ENCODE measurements at regions of chr19 and their contacts with region 1.

Region 1: DNA sequence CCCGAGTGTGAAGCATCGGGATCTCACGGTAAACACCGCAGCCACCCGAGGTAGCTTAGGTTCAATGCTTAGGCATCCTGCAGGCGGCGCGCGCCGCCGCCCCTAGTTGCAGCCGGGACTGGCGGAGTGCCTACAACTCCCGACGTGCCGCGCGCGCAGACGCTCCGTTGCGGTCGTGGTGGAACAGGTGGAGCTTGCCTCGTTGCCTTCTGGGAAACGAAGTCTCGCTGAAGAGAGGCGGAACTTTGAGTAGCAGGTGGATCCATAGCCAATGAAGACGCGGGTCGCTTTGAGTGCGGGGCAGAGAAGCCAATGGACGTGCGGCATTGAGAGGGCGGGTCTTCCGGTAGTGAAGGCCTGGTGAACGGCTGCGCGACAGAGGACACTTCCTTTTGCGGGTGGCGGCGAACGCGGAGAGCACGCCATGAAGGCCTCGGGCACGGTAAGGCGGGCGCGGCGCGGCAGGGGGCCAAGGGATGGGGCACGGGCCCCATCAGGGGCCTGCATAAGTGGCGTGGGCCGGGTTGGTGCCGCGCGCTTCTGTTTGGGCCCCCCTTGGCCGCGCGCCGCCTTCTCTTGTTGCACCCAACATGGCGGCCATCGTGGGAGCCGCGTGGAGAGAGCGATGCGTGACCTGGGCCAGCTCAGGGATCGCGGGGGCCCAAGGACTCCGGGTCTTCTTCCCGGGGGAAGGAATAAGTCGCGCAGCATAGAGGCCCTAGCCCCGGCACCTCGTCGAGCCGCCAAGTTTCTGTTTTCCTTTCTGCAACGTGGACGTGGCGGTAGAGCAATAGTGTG is at the start of gene RPL18A:
- DNase-seq: peak; percentile 96
- H3K4me3 ChIP-seq: peak within 1 kb of the TSS; percentile 86 to 91
- H3K27ac ChIP-seq: peak within 1 kb of the TSS; percentile 62 to 78
- H3K4me1 ChIP-seq: peaks cover 0 to 17% of the 10 kb centered on the region in 2 experiments; a peak in 1 of 4 replicates
- H3K27me3 ChIP-seq: no peaks in the 10 kb centered on the region
- CTCF ChIP-seq: peak; percentile 78
- EP300 ChIP-seq: no peak
- RAD21 ChIP-seq: peak; percentile 64
- polyA plus RNA-seq, gene RPL18A: 2,138 and 2,695 TPM in 2 replicates

Region 2: GRCh38 chr19:17605761-17606745 is 253.7 kb before region 1 on chr19:
- CTCF ChIA-PET with region 1: interaction called, 17 read pairs
- POLR2A ChIA-PET with region 1: interaction called, 6 read pairs
- DNase-seq: peak; percentile 98
- H3K4me3 ChIP-seq: peak overlapping the region; percentile 50 to 65
- H3K27ac ChIP-seq: peak overlapping the region; percentile 39 to 90; a peak in 2 of 4 replicates
- H3K4me1 ChIP-seq: peaks cover 0 to 14% of the 10 kb centered on the region in 2 experiments; a peak in 1 of 4 replicates
- H3K27me3 ChIP-seq: peaks cover 26% of the 10 kb centered on the region; the same call in 1 of the 2 replicates
- CTCF ChIP-seq: peak; percentile 61
- EP300 ChIP-seq: no peak
- RAD21 ChIP-seq: peak; percentile 31

Region 3: DNA sequence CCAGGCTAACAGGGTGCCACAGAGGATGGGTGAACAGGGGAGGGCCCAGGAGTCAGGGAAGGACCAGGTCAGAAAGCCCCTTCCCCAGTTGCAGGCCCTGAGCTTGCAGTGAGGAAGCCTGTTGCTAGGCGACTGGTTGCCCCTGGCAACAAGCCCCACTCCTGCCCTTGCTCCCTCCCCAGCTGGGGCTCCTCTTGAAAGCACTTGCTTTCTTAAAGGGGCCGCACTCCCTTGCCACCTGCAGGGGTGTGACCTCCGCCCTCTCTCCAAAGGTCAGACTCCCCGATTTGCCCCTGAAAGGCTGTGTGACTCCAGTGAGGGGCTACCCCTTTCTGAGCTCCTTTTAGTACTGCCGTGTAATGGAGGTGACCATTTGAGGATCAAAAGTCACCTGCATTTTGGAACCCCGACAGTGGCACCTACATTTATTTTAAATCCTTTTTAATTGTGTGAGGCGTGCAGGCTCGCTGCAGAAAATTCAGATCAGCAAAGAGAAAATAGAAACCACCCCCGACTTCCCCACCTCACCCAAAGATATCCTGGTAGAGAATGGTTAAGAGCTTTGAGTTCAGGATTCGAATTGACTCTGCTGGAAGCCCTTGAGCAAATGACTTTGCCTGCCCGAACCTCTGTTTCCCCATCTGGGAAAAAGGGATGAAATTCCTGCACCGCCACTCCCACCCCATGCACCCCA is 103.6 kb before region 1 on chr19:
- CTCF ChIA-PET with region 1: interaction called, 11 read pairs
- POLR2A ChIA-PET with region 1: interaction called, 6 read pairs
- DNase-seq: peak; percentile 78
- H3K4me3 ChIP-seq: no peak overlapping the region
- H3K27ac ChIP-seq: peak overlapping the region in 1 of 2 experiments; percentile 30; a peak in 1 of 4 replicates
- H3K4me1 ChIP-seq: peaks cover 9 to 17% of the 10 kb centered on the region in 2 experiments; a peak in 1 of 4 replicates
- H3K27me3 ChIP-seq: no peaks in the 10 kb centered on the region
- CTCF ChIP-seq: no peak
- EP300 ChIP-seq: no peak
- RAD21 ChIP-seq: no peak

Region 4: GRCh38 chr19:17794731-17795536 is 64.8 kb before region 1 on chr19 and contains the start of gene B3GNT3:
- CTCF ChIA-PET with region 1: interaction called, 15 read pairs
- POLR2A ChIA-PET with region 1: interaction called, 12 read pairs
- DNase-seq: no peak
- H3K4me3 ChIP-seq: no peak within 1 kb of the TSS
- H3K27ac ChIP-seq: no peak within 1 kb of the TSS
- H3K4me1 ChIP-seq: peaks cover 5 to 28% of the 10 kb centered on the region in 2 experiments; a peak in 2 of 4 replicates
- H3K27me3 ChIP-seq: peaks cover 13% of the 10 kb centered on the region
- CTCF ChIP-seq: no peak
- EP300 ChIP-seq: no peak
- RAD21 ChIP-seq: no peak
- polyA plus RNA-seq, gene B3GNT3: not detected in 2 replicates

Region 5: DNA sequence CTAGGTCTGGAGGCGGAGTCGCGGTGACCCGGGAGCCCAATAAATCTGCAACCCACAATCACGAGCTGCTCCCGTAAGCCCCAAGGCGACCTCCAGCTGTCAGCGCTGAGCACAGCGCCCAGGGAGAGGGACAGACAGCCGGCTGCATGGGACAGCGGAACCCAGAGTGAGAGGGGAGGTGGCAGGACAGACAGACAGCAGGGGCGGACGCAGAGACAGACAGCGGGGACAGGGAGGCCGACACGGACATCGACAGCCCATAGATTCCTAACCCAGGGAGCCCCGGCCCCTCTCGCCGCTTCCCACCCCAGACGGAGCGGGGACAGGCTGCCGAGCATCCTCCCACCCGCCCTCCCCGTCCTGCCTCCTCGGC is 12.1 kb after region 1 on chr19 and contains the start of gene SLC5A5:
- CTCF ChIA-PET with region 1: interaction called, 15 read pairs
- POLR2A ChIA-PET with region 1: interaction called, 26 read pairs
- DNase-seq: peak; percentile 64
- H3K4me3 ChIP-seq: no peak within 1 kb of the TSS
- H3K27ac ChIP-seq: no peak within 1 kb of the TSS
- H3K4me1 ChIP-seq: peaks cover 0 to 5% of the 10 kb centered on the region in 2 experiments; a peak in 1 of 4 replicates
- H3K27me3 ChIP-seq: peaks cover 25% of the 10 kb centered on the region
- CTCF ChIP-seq: no peak
- EP300 ChIP-seq: no peak
- RAD21 ChIP-seq: no peak
- polyA plus RNA-seq, gene SLC5A5: 0.02 TPM in 2 replicates

Region 6: GRCh38 chr19:17886515-17886914 is 26.8 kb after region 1 on chr19:
- CTCF ChIA-PET with region 1: no interaction called
- POLR2A ChIA-PET with region 1: no interaction called
- DNase-seq: no peak
- H3K4me3 ChIP-seq: no peak overlapping the region
- H3K27ac ChIP-seq: no peak overlapping the region
- H3K4me1 ChIP-seq: no peaks in the 10 kb centered on the region
- H3K27me3 ChIP-seq: peaks cover 8% of the 10 kb centered on the region; the same call in 1 of the 2 replicates
- CTCF ChIP-seq: no peak
- EP300 ChIP-seq: no peak
- RAD21 ChIP-seq: no peak

Region 7: DNA sequence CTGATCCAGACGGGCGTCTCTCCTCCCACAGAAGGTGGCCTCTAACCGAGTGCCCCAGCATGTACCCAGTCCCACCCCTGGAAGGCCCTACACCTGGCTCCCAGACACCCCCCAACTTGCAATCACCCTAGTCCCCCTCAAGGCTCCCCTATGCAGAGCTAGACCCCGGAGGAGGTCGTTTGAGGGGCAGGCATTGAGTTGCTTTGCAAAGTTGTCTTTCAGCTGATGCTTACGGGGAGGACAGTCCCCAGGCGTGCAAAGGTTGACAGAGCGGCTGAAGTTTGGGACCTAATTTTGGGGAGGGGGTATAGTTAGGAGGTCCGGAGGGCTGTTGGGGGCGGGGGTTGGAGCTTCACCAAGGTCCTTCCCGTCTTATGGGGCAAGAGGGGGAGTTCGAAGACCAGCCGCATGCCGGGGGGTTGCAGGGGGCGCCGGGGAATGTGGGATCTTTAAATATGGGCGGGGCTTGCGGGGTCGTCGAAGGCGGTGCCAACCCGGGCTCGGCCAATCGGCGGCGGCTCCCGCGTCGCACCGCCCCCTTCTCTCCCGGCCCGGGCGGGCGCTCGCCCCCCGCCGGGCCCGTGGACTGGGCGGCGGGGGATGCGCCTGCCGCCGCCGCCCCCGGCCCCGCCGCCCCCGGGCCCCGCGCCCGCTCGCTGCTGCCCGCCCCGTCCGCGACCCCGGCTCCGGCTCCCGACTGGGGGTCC is 107.0 kb after region 1 on chr19 and contains the start of gene KCNN1:
- CTCF ChIA-PET with region 1: no interaction called
- POLR2A ChIA-PET with region 1: no interaction called
- DNase-seq: peak; percentile 98
- H3K4me3 ChIP-seq: peak within 1 kb of the TSS; percentile 67 to 68
- H3K27ac ChIP-seq: no peak within 1 kb of the TSS
- H3K4me1 ChIP-seq: peaks cover 0 to 13% of the 10 kb centered on the region in 2 experiments; a peak in 2 of 4 replicates
- H3K27me3 ChIP-seq: 0 out of 2 replicates have a peak, but pooled peaks cover 4% of the 10 kb centered on the region
- CTCF ChIP-seq: no peak
- EP300 ChIP-seq: no peak
- RAD21 ChIP-seq: no peak
- polyA plus RNA-seq, gene KCNN1: 2.7 and 3.6 TPM in 2 replicates

Measured in SK-N-SH (cell line).